ENCODE measurements at regions of chrX and their contacts with region 1.

Region 1: DNA sequence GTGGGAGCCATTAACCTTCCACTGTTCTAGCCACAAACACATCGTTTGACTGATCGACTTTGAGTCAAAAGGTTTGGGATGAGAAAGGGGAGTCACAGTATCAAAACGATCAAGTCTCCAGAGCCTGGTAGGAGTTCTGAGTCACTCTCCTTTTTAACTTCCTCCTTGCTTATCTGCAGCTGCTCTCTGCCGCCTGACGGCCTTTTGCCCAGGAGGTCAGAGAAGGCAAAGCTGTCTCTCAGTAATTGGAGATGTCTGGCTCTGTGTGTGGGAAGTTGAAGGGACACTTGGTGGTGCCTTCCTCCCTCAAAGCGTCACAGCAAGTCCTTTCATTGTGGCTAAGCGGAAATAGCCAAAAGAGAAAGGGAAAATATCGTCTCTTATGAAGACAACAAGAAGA is 63.1 kb downstream of the ANOS1 start:
- DNase-seq: peak; percentile 34 to 73
- ATAC-seq: peak; percentile 98
- H3K4me3 ChIP-seq: no peak overlapping the region
- H3K27ac ChIP-seq: peak overlapping the region; percentile 67 to 76 (median 72)
- H3K4me1 ChIP-seq: peaks cover 0 to 4% of the 10 kb centered on the region in 2 donors
- H3K27me3 ChIP-seq: no peaks in the 10 kb centered on the region
- CTCF ChIP-seq: no peak
- POLR2A ChIP-seq: no peak

Region 2: DNA sequence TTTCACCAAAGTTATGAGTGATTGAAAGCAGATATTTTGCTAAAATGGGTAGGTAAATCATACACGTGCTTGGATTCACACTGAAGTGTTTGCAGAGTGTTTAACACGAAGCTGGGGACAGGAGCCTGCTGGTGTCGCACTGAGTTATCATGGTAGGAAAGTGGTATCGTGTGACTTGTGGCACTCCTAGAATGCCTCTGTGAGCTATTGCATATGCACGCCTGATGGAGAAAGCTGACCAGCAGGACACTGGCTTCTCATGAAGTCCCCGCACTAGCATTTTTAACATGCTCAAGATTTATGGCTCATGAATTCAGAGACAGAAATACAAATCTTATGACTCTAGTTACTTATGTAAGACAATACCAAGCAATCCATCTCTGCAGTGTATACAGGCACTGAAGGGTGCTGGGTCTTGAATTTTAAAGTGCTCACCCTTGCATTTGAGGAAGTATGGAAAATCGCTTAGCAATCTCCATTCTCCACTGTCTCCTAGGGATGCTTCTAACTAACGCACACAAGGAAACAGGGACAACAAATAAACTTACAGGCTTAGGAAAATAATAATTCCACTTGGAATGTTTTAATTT is 184.4 kb before region 1 on chrX:
- in situ Hi-C with region 1: no loop called
- intact Hi-C with region 1: no loop called
- DNase-seq: peak; percentile 17 to 20
- ATAC-seq: peak; percentile 86
- H3K4me3 ChIP-seq: no peak overlapping the region
- H3K27ac ChIP-seq: no peak overlapping the region
- H3K4me1 ChIP-seq: no peaks in the 10 kb centered on the region
- H3K27me3 ChIP-seq: no peaks in the 10 kb centered on the region
- CTCF ChIP-seq: no peak
- POLR2A ChIP-seq: no peak

Region 3: GRCh38 chrX:8731559-8732395 is 63.0 kb after region 1 on chrX and contains the start of gene ANOS1:
- in situ Hi-C with region 1: no loop called
- intact Hi-C with region 1: loop called (anchors 2 kb)
- DNase-seq: peak; percentile 52 to 67
- ATAC-seq: peak; percentile 79 to 85
- H3K4me3 ChIP-seq: peak within 1 kb of the TSS; percentile 56 to 62 (median 60)
- H3K27ac ChIP-seq: peak within 1 kb of the TSS; percentile 63 to 79 (median 71)
- H3K4me1 ChIP-seq: no peaks in the 10 kb centered on the region
- H3K27me3 ChIP-seq: peaks cover 0 to 10% (median 5%) of the 10 kb centered on the region in 3 donors
- CTCF ChIP-seq: no peak
- POLR2A ChIP-seq: peak; percentile 30 to 70
- total RNA-seq, gene ANOS1: 5.0 to 27.8 (median 13.0) TPM

Measured in gastrocnemius medialis (tissue), 4 donors.